MCF 10A (cell line): ENCODE measurements at regions of chr18 and their contacts with region 1.

Region 1: DNA sequence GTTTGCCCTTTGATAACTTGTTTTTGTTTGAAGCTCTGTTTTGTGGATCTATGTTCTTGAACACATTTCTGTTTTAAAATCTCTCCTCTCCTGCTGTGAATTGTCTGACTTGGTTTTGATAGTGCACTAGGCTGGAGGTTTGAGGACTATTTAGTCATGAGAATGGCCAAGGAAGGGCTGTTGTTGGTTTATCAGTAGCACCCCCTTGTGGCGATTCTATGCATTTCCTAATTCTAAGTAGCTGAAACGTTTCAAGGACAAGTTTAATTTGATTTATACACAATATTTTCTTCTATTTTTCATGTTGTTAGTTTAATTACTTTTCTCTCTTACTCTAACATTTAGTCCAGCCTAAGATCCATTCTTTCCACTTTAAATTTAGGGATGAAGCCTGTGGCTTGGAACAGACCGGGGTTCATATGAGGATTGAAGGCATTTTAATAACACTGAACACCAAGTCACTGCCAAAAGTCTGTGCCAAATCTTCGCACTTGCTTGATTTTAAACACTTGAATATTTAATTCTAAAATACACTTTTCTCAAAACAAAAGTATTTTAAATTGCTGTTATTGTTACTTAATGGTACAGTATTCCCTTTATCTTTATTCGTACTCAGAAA is 166.0 kb downstream of the SOCS6 start:
- DNase-seq: peak; percentile 78
- H3K4me3 Mint-ChIP-seq: no peak overlapping the region
- H3K27ac Mint-ChIP-seq: no peak overlapping the region
- H3K4me1 Mint-ChIP-seq: no peaks in the 10 kb centered on the region
- H3K27me3 Mint-ChIP-seq: no peaks in the 10 kb centered on the region
- CTCF ChIP-seq: peak; percentile 77

Region 2: DNA sequence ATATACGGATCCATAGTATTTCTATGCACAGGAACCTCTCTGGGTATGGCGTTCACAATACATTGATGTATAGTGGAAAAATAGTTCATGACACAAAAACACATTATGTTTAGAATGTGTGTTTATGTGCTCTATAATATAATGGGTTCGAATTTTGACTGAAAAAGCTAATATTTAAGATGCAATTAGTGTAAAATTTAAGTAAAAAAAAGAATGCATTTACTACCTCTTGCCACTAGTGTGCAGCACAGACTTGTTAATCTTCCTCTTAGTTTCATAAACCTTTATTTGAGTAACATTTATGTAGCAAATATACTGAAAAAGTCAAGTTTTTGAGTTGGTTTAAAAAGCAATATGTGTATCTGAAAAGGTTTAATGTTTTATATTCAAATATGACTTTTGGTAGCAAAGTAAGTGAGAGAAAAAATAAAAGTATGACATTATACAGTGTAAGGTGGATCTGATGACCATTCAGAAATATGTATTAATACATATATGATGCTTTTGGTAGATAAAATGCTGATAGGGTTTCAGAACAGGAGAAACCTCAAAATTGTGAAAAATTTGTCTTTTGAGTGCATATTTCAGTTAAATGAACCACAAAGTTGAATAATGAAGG is 1607.5 kb before region 1 on chr18:
- CTCF ChIA-PET with region 1: no interaction called
- POLR2A ChIA-PET with region 1: no interaction called
- intact Hi-C with region 1: loop called (anchors 5 kb)
- DNase-seq: peak; percentile 25
- H3K4me3 Mint-ChIP-seq: no peak overlapping the region
- H3K27ac Mint-ChIP-seq: no peak overlapping the region
- H3K4me1 Mint-ChIP-seq: no peaks in the 10 kb centered on the region
- H3K27me3 Mint-ChIP-seq: no peaks in the 10 kb centered on the region
- CTCF ChIP-seq: peak; percentile 61

Region 3: GRCh38 chr18:70082430-70082829 is 372.4 kb before region 1 on chr18:
- CTCF ChIA-PET with region 1: interaction called, 4 read pairs
- POLR2A ChIA-PET with region 1: no interaction called
- intact Hi-C with region 1: loop called (anchors 2 kb)
- DNase-seq: no peak
- H3K4me3 Mint-ChIP-seq: no peak overlapping the region
- H3K27ac Mint-ChIP-seq: no peak overlapping the region
- H3K4me1 Mint-ChIP-seq: no peaks in the 10 kb centered on the region
- H3K27me3 Mint-ChIP-seq: no peaks in the 10 kb centered on the region
- CTCF ChIP-seq: no peak

Region 4: GRCh38 chr18:70172225-70172624 is 282.6 kb before region 1 on chr18:
- CTCF ChIA-PET with region 1: interaction called, 11 read pairs
- POLR2A ChIA-PET with region 1: no interaction called
- intact Hi-C with region 1: loop called (anchors 1 kb)
- DNase-seq: peak; percentile 4
- H3K4me3 Mint-ChIP-seq: no peak overlapping the region
- H3K27ac Mint-ChIP-seq: no peak overlapping the region
- H3K4me1 Mint-ChIP-seq: no peaks in the 10 kb centered on the region
- H3K27me3 Mint-ChIP-seq: no peaks in the 10 kb centered on the region
- CTCF ChIP-seq: peak; percentile 27

Region 5: GRCh38 chr18:70190529-70190928 is 264.3 kb before region 1 on chr18:
- CTCF ChIA-PET with region 1: interaction called, 174 read pairs
- POLR2A ChIA-PET with region 1: no interaction called
- intact Hi-C with region 1: no loop called
- DNase-seq: no peak
- H3K4me3 Mint-ChIP-seq: no peak overlapping the region
- H3K27ac Mint-ChIP-seq: peak overlapping the region; percentile 14
- H3K4me1 Mint-ChIP-seq: no peaks in the 10 kb centered on the region
- H3K27me3 Mint-ChIP-seq: no peaks in the 10 kb centered on the region
- CTCF ChIP-seq: no peak

Region 6: DNA sequence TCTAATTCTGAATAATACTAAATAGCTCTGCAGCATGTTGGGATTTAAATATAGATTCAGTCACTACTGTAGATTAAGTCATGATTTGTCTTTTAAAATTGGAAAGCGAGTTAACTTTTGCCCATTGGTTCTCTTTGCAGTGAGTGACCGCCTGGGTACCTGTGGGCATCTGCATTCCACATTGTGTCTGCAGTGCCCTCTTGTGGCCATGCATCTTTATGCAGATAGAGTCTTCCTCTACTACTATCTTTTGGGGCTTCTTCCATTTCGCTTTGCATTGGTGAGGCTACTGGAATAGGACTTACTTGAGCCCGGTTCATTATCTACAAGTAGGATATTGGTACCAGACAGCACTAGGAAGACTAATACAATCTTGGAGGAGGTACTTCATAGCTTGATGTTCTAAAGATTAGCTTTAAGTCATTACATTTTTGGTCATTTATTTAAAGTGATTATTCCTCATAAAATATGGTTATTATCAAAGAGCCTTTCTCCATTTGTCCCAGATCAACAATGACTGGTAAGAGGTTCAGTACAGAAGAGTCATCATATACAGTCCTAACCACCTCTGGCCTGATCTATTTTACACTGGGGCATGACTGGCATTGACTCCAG is 37.0 kb after region 1 on chr18:
- CTCF ChIA-PET with region 1: interaction called, 12 read pairs
- POLR2A ChIA-PET with region 1: no interaction called
- intact Hi-C with region 1: no loop called
- DNase-seq: peak; percentile 79
- H3K4me3 Mint-ChIP-seq: no peak overlapping the region
- H3K27ac Mint-ChIP-seq: no peak overlapping the region
- H3K4me1 Mint-ChIP-seq: peaks cover 8% of the 10 kb centered on the region
- H3K27me3 Mint-ChIP-seq: no peaks in the 10 kb centered on the region
- CTCF ChIP-seq: peak; percentile 81